ENCODE measurements at regions of chr7 and their contacts with region 1.

Region 1: DNA sequence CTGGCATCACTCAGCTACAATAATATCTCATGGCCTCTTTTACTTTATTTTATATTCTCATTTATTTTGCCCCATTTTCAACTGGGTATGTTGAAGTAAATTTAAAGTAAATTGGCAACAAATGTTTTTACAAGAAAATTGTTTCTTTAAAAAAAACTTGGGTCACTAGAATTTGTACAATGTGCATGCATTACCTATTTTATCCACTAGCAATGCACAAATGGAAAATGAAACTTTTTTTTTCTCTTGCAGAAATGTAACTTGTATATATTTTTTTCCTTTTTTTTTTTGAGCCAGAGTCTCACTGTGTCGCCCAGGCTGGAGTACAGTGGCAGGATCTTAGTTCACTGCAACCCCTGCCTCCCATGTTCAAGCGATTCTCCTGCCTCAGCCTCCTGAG is 10.3 kb upstream of the H2AZ2 start:
- DNase-seq: no peak
- H3K4me3 ChIP-seq: no peak overlapping the region
- H3K27ac ChIP-seq: no peak overlapping the region
- H3K4me1 ChIP-seq: peaks cover 0 to 8% (median 7%) of the 10 kb centered on the region in 4 donors
- H3K27me3 ChIP-seq: no peaks in the 10 kb centered on the region
- CTCF ChIP-seq: peak in 2 of 3 experiments; percentile 13 to 19
- EP300 ChIP-seq: no peak
- POLR2A ChIP-seq: no peak

Region 2: DNA sequence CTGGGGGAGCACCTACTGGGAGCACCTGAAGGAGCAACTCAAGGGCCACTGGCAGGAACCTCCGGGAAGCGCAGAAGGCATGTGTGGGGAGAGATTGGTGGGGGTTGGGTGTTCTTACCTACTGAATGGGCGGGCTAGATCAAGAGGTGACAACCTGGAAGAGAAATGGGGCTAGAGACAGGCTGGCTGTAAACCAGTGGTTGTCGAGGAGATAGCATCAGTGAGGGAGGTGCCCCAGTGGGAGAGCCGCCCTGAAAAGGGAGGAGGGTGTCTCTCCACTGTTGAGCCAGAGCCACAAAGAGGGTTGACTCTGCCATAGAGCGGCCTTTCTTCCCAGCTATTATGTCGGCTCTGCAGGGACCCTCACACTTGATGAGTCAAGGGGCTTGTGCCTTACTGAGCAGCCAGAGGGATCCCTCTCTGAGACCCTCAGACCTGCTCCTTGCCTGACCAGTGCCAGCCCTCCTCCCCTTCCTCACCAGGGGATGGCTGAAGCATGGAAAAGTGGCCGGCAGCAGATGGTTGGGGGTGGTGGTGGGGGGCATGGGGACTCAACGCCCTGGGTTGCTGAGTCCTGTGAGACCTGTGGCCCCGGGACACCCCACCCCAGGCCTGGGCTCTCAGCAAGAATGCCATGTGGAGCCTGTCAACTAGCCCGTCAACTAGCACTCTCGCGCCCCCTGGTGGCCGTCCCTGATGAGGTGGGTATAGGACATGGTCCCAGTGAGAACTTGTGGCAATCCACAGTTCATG is 63.6 kb after region 1 on chr7:
- intact Hi-C with region 1: loop called (anchors 2 kb)
- DNase-seq: peak; percentile 99
- H3K4me3 ChIP-seq: no peak overlapping the region
- H3K27ac ChIP-seq: no peak overlapping the region
- H3K4me1 ChIP-seq: peaks cover 0 to 8% (median 4%) of the 10 kb centered on the region in 4 donors
- H3K27me3 ChIP-seq: no peaks in the 10 kb centered on the region
- CTCF ChIP-seq: peak; percentile 79 to 91 (median 88)
- EP300 ChIP-seq: no peak
- POLR2A ChIP-seq: no peak

Measured in esophagus muscularis mucosa (tissue), 4 donors.